ENCODE measurements at regions of chr16 and their contacts with region 1.

Region 1: DNA sequence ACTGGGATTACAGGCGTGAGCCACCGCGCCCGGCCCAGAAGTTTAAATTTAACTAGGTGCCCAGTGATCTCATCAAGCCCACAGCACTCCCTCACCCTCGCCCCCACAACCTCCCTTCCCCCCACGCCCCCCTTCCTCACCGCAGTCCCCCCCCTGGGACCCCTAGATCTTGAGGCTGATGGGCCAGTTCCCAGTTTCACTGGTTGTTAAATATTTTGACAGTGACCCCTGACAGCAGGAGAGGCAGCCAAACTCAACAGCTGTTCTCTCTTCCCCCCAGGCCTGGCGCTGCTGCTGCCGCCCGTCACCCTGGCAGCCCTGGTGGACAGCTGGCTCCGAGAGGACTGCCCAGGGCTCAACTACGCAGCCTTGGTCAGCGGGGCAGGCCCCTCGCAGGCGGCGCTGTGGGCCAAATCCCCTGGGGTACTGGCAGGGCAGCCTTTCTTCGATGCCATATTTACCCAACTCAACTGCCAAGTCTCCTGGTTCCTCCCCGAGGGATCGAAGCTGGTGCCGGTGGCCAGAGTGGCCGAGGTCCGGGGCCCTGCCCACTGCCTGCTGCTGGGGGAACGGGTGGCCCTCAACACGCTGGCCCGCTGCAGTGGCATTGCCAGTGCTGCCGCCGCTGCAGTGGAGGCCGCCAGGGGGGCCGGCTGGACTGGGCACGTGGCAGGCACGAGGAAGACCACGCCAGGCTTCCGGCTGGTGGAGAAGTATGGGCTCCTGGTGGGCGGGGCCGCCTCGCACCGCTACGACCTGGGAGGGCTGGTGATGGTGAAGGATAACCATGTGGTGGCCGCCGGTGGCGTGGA is 15.6 kb downstream of the QPRT start:
- DNase-seq: no peak
- CTCF ChIP-seq: no peak

Region 2: DNA sequence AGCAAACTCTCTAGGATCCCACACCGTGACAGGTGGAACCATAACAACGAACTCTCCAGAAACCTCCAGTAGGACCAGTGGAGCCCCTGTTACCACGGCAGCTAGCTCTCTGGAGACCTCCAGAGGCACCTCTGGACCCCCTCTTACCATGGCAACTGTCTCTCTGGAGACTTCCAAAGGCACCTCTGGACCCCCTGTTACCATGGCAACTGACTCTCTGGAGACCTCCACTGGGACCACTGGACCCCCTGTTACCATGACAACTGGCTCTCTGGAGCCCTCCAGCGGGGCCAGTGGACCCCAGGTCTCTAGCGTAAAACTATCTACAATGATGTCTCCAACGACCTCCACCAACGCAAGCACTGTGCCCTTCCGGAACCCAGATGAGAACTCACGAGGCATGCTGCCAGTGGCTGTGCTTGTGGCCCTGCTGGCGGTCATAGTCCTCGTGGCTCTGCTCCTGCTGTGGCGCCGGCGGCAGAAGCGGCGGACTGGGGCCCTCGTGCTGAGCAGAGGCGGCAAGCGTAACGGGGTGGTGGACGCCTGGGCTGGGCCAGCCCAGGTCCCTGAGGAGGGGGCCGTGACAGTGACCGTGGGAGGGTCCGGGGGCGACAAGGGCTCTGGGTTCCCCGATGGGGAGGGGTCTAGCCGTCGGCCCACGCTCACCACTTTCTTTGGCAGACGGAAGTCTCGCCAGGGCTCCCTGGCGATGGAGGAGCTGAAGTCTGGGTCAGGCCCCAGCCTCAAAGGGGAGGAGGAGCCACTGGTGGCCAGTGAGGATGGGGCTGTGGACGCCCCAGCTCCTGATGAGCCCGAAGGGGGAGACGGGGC is 30.3 kb before region 1 on chr16:
- CTCF ChIA-PET with region 1: interaction called, 14 read pairs
- POLR2A ChIA-PET with region 1: no interaction called
- DNase-seq: peak; percentile 46
- CTCF ChIP-seq: no peak

Region 3: DNA sequence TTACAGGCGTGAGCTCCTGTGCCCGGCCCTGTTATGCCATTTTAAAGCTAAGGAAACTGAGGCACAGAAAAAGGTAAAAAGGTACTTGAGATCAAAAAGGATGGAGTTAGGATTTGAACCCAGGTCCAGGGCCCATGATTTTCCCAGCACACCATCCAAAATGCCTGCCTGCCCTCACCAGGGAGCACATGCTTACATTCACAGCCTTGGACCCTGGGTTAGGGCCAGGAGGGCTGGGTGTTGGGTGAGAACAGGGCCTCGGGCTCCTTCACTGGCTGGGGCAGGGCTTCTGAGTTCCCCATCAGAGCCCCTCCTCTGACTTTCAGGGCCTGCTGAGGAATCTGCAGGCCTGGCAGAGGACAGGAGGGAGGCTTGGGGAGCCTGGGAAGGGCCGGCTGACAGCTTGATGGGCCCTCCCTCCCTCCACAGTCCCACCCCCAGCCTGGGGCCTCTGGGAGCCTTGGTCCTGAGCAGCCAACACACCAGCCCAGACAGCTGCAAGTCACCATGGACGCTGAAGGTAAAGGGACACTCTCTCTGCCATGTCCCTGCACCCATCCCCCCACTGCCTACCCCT is 15.8 kb before region 1 on chr16 and contains the start of gene QPRT:
- CTCF ChIA-PET with region 1: interaction called, 32 read pairs
- POLR2A ChIA-PET with region 1: no interaction called
- DNase-seq: peak; percentile 83
- CTCF ChIP-seq: no peak

Region 4: GRCh38 chr16:29720699-29721098 is 26.1 kb after region 1 on chr16:
- CTCF ChIA-PET with region 1: interaction called, 14 read pairs
- POLR2A ChIA-PET with region 1: no interaction called
- DNase-seq: no peak
- CTCF ChIP-seq: no peak

Region 5: GRCh38 chr16:29729116-29729521 is 34.5 kb after region 1 on chr16:
- CTCF ChIA-PET with region 1: interaction called, 13 read pairs
- POLR2A ChIA-PET with region 1: no interaction called
- DNase-seq: no peak
- CTCF ChIP-seq: peak; percentile 44

Region 6: GRCh38 chr16:29915590-29916247 is 221.1 kb after region 1 on chr16:
- CTCF ChIA-PET with region 1: no interaction called
- POLR2A ChIA-PET with region 1: no interaction called
- DNase-seq: no peak
- CTCF ChIP-seq: no peak